Heart right ventricle (tissue), 16 donors: ENCODE measurements at regions of chr20 and their contacts with region 1.

Region 1: GRCh38 chr20:41978246-41978791 is 360.1 kb upstream of the CHD6 start:
- DNase-seq: no peak
- ATAC-seq: no peak
- H3K4me3 ChIP-seq: no peak overlapping the region
- H3K27ac ChIP-seq: no peak overlapping the region
- H3K4me1 ChIP-seq: no peaks in the 10 kb centered on the region
- H3K27me3 ChIP-seq: no peaks in the 10 kb centered on the region
- CTCF ChIP-seq: no peak

Region 2: GRCh38 chr20:41524980-41525613 is 453.2 kb before region 1 on chr20:
- intact Hi-C with region 1: no loop called
- DNase-seq: peak; percentile 75 to 86
- ATAC-seq: peak; percentile 78 to 97 (median 94)
- H3K4me3 ChIP-seq: peak overlapping the region in 5 of 10 donors; percentile 5 to 28 (median 14)
- H3K27ac ChIP-seq: peak overlapping the region in 5 of 10 donors; percentile 17 to 49 (median 26)
- H3K4me1 ChIP-seq: peaks cover 0 to 40% (median 33%) of the 10 kb centered on the region in 9 donors
- H3K27me3 ChIP-seq: no peaks in the 10 kb centered on the region
- CTCF ChIP-seq: no peak

Region 3: DNA sequence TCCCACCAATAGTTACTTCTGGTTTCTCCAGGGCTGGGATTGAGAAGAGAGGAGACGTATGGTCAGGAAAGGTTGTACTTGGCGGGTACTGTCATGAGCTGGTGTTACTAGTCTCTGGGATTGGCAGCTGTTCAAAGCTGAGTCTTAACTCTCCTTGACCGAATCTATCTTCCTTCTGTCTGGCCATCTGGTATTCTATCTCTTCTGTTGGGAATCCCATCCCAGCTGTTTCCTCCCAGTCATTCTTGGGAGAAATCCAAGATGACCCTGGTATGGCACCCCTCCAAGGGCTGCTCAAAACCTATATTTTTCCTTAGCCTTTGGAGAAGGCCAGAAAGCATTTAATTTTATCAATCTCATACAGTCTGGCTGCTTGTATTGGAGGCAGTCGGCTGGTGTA is 73.1 kb before region 1 on chr20:
- intact Hi-C with region 1: no loop called
- DNase-seq: no peak
- ATAC-seq: no peak
- H3K4me3 ChIP-seq: no peak overlapping the region
- H3K27ac ChIP-seq: no peak overlapping the region
- H3K4me1 ChIP-seq: no peaks in the 10 kb centered on the region
- H3K27me3 ChIP-seq: peaks cover 0 to 26% (median 0%) of the 10 kb centered on the region in 7 donors
- CTCF ChIP-seq: no peak

Region 4: GRCh38 chr20:42005211-42005610 is 26.9 kb after region 1 on chr20:
- intact Hi-C with region 1: loop called in 1 of 10 experiments (anchors 2 kb)
- DNase-seq: no peak
- ATAC-seq: no peak
- H3K4me3 ChIP-seq: no peak overlapping the region
- H3K27ac ChIP-seq: no peak overlapping the region
- H3K4me1 ChIP-seq: no peaks in the 10 kb centered on the region
- H3K27me3 ChIP-seq: peaks cover 0 to 17% (median 10%) of the 10 kb centered on the region in 7 donors
- CTCF ChIP-seq: no peak

Region 5: DNA sequence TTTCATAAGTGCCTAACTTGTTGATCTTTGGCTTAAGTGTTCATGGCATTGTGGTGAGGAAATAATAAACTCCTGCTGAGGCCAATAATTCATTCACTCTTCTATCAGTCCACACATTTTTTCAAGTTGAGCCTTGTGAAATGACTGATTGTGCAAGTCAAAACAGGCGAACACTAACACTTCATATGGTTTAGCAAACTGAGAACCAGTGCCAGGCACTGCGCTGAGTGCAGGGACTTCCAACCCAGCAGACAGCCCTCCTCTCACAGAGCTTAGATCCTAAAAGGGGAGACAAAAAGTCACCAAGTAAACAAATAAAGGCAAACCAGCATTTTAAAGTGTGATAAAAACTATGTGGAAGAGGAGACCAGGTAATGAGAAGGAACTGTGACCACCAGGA is 776.4 kb after region 1 on chr20:
- intact Hi-C with region 1: no loop called
- DNase-seq: no peak
- ATAC-seq: peak in 1 of 8 donors; percentile 73
- H3K4me3 ChIP-seq: no peak overlapping the region
- H3K27ac ChIP-seq: no peak overlapping the region
- H3K4me1 ChIP-seq: no peaks in the 10 kb centered on the region
- H3K27me3 ChIP-seq: no peaks in the 10 kb centered on the region
- CTCF ChIP-seq: no peak